B cell (primary cell): ENCODE measurements at regions of chrX and their contacts with region 1.

Region 1: GRCh38 chrX:47361538-47362511 is 8.6 kb upstream of the ZNF157 start:
- DNase-seq: peak; percentile 90
- ATAC-seq: peak; percentile 77
- H3K4me3 ChIP-seq: peak overlapping the region; percentile 39 to 63 (median 55)
- H3K4me3 Mint-ChIP-seq: peak overlapping the region; percentile 90
- H3K27ac ChIP-seq: peak overlapping the region; percentile 86 to 92
- H3K27ac Mint-ChIP-seq: peak overlapping the region; percentile 90
- H3K4me1 ChIP-seq: peaks cover 17 to 29% of the 10 kb centered on the region in 2 donors
- H3K4me1 Mint-ChIP-seq: peaks cover 34% of the 10 kb centered on the region
- H3K27me3 ChIP-seq: no peaks in the 10 kb centered on the region
- H3K27me3 Mint-ChIP-seq: no peaks in the 10 kb centered on the region
- CTCF ChIP-seq: no peak

Region 2: GRCh38 chrX:47217642-47218279 is 144.1 kb before region 1 on chrX:
- CTCF ChIA-PET with region 1: no interaction called
- POLR2A ChIA-PET with region 1: interaction called, 3 read pairs
- intact Hi-C with region 1: loop called (anchors 1 kb)
- DNase-seq: peak; percentile 96
- ATAC-seq: peak; percentile 80
- H3K4me3 ChIP-seq: peak overlapping the region; percentile 69 to 83 (median 80)
- H3K4me3 Mint-ChIP-seq: peak overlapping the region; percentile 96
- H3K27ac ChIP-seq: peak overlapping the region; percentile 94 to 99
- H3K27ac Mint-ChIP-seq: peak overlapping the region; percentile 100
- H3K4me1 ChIP-seq: peaks cover 26 to 27% of the 10 kb centered on the region in 2 donors
- H3K4me1 Mint-ChIP-seq: peaks cover 39% of the 10 kb centered on the region
- H3K27me3 ChIP-seq: no peaks in the 10 kb centered on the region
- H3K27me3 Mint-ChIP-seq: no peaks in the 10 kb centered on the region
- CTCF ChIP-seq: no peak

Region 3: DNA sequence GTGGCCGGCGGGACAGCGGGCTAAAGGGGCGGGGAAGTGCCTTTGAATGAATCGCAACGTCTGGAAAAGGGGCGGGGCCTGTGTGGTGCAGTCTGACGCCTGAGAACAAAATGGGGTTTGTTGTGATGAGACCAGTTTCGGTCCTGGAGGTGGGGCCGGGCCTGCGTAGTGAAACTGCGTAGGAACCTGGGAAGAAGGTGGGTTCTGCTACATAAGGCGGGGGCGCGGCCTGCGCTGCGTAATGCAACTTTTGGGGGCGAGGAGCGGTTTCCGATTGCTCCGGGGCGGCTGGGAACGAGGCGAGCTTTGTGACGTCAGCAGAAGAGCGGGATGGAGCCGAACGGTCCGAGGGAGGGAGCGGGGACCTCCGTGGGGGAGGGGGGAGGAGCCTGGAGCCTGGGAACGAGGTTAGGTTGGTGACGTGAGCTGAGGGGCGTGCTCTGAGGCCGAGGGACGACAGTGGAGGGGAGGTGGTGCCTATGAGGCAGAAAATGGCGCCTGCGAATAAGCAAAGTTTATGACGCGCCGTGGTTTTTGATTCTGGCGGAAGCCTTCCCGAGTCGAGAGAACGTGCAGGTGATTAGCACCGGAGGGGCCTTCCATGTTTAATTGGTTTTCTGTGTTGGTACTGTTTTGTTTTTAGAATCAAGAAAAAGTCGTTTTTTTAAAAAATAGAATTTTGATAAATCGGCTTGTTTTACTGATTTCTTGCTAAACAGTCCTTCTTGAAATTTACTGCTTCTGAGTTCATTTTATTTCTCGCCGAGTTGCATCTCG is 128.3 kb before region 1 on chrX:
- CTCF ChIA-PET with region 1: no interaction called
- POLR2A ChIA-PET with region 1: interaction called, 5 read pairs
- intact Hi-C with region 1: loop called (anchors 1 kb)
- DNase-seq: peak; percentile 96
- ATAC-seq: peak; percentile 88
- H3K4me3 ChIP-seq: peak overlapping the region; percentile 67 to 82 (median 75)
- H3K4me3 Mint-ChIP-seq: peak overlapping the region; percentile 94
- H3K27ac ChIP-seq: peak overlapping the region; percentile 96 to 99
- H3K27ac Mint-ChIP-seq: peak overlapping the region; percentile 99
- H3K4me1 ChIP-seq: peaks cover 0 to 8% of the 10 kb centered on the region in 2 donors
- H3K4me1 Mint-ChIP-seq: peaks cover 21% of the 10 kb centered on the region
- H3K27me3 ChIP-seq: no peaks in the 10 kb centered on the region
- H3K27me3 Mint-ChIP-seq: no peaks in the 10 kb centered on the region
- CTCF ChIP-seq: no peak

Region 4: GRCh38 chrX:47384502-47384901 is 22.7 kb after region 1 on chrX:
- CTCF ChIA-PET with region 1: interaction called, 7 read pairs
- POLR2A ChIA-PET with region 1: interaction called, 4 read pairs
- intact Hi-C with region 1: loop called (anchors 1 kb)
- DNase-seq: peak; percentile 80
- ATAC-seq: peak; percentile 76
- H3K4me3 ChIP-seq: no peak overlapping the region
- H3K4me3 Mint-ChIP-seq: no peak overlapping the region
- H3K27ac ChIP-seq: no peak overlapping the region
- H3K27ac Mint-ChIP-seq: no peak overlapping the region
- H3K4me1 ChIP-seq: peaks cover 0 to 8% of the 10 kb centered on the region in 2 donors
- H3K4me1 Mint-ChIP-seq: peaks cover 11% of the 10 kb centered on the region
- H3K27me3 ChIP-seq: no peaks in the 10 kb centered on the region
- H3K27me3 Mint-ChIP-seq: no peaks in the 10 kb centered on the region
- CTCF ChIP-seq: peak; percentile 78

Region 5: DNA sequence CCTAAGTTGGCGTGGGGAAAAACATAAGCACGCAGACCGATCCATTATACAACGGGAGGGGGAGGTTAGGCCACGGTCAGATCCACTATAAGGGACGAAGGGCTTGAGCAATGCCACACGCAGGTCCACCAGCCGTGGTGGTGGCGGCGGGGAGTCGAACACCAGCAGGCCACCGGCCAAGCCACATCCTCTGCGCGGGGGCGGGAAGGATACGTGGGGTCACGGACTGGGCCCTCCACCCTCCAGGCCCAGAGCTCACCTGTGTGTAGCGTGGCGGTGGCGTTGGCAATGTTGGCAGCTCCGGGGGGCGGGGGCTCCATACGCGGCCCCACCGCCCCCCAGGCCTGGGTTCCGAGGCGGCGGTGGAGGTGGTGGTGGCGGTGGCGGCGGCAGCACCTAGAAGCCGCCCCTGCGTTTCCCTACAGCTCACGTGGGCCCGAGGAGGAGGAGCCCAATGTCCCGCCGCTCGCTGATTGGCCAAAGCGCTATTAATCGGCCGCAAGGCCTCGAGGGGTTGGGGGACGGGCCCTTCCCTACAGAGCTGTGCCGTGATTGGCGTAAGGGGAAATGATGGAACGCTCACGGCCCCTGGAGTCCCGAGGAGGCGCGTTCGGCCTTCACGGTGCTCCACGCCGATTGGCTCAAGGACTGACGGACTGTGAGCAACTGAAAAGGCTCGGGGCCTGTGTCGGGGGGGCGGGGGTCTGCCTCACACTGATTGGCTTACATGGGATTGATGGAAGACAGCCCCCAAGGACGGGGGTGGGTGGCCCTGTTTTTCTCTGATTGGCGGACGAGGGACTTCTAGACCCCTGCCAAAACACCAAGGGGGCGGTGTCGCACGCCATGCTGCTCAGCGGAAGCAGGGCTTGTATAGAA is 288.6 kb after region 1 on chrX and contains the start of gene ELK1:
- CTCF ChIA-PET with region 1: no interaction called
- POLR2A ChIA-PET with region 1: no interaction called
- intact Hi-C with region 1: loop called (anchors 10 kb)
- DNase-seq: peak; percentile 94
- ATAC-seq: peak; percentile 91
- H3K4me3 ChIP-seq: peak within 1 kb of the TSS in 4 of 5 experiments; percentile 68 to 77 (median 75)
- H3K4me3 Mint-ChIP-seq: peak within 1 kb of the TSS; percentile 93
- H3K27ac ChIP-seq: peak within 1 kb of the TSS; percentile 69 to 73
- H3K27ac Mint-ChIP-seq: peak within 1 kb of the TSS; percentile 94
- H3K4me1 ChIP-seq: peaks cover 11 to 26% of the 10 kb centered on the region in 2 donors
- H3K4me1 Mint-ChIP-seq: peaks cover 29% of the 10 kb centered on the region
- H3K27me3 ChIP-seq: no peaks in the 10 kb centered on the region
- H3K27me3 Mint-ChIP-seq: no peaks in the 10 kb centered on the region
- CTCF ChIP-seq: no peak
- total RNA-seq, gene ELK1: 20.8 and 22.7 TPM in 2 replicates